Motor neuron (in vitro differentiated cells): ENCODE measurements at regions of chr13 and their contacts with region 1.

Region 1: DNA sequence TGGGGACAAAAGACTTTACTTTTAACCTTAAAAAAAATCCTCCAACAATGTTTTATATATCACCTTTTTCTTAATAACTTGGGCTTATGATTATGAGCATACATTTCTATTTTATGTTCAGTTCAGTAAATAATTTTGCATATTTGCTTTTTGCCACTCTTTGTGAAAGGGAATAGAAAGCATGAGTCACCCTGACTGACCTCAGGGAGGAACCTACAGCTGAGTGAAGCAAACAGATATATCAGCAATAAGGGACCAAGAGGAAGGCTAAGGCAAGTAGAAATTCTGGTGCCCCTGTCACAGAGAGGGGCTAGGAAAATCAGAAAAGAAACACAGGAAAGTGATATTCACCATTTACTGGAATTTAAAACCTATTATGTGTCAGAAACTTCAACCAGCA is 37.2 kb upstream of the SOHLH2 start:
- ATAC-seq: peak in 7 of 8 experiments; percentile 35 to 76 (median 53)
- H3K4me3 ChIP-seq: no peak overlapping the region
- H3K27ac ChIP-seq: no peak overlapping the region
- H3K4me1 ChIP-seq: peaks cover 5 to 17% of the 10 kb centered on the region in 2 donors

Region 2: GRCh38 chr13:35978603-35979316 is 272.8 kb before region 1 on chr13:
- in situ Hi-C with region 1: loop called in 3 of 9 experiments (anchors 25 kb)
- ATAC-seq: peak; percentile 28 to 75 (median 58)
- H3K4me3 ChIP-seq: no peak overlapping the region
- H3K27ac ChIP-seq: no peak overlapping the region
- H3K4me1 ChIP-seq: peaks cover 0 to 5% of the 10 kb centered on the region in 2 donors

Region 3: GRCh38 chr13:36436811-36437210 is 185.3 kb after region 1 on chr13:
- in situ Hi-C with region 1: no loop called
- ATAC-seq: no peak
- H3K4me3 ChIP-seq: no peak overlapping the region
- H3K27ac ChIP-seq: no peak overlapping the region
- H3K4me1 ChIP-seq: no peaks in the 10 kb centered on the region

Region 4: GRCh38 chr13:36549755-36550154 is 298.2 kb after region 1 on chr13:
- in situ Hi-C with region 1: no loop called
- ATAC-seq: peak in 5 of 8 experiments; percentile 82 to 98 (median 94)
- H3K4me3 ChIP-seq: no peak overlapping the region
- H3K27ac ChIP-seq: peak overlapping the region in 1 of 2 donors; percentile 16
- H3K4me1 ChIP-seq: peaks cover 8 to 17% of the 10 kb centered on the region in 2 donors